Dorsolateral prefrontal cortex (tissue), 120 donors: ENCODE measurements at regions of chr15 and their contacts with region 1.

Region 1: DNA sequence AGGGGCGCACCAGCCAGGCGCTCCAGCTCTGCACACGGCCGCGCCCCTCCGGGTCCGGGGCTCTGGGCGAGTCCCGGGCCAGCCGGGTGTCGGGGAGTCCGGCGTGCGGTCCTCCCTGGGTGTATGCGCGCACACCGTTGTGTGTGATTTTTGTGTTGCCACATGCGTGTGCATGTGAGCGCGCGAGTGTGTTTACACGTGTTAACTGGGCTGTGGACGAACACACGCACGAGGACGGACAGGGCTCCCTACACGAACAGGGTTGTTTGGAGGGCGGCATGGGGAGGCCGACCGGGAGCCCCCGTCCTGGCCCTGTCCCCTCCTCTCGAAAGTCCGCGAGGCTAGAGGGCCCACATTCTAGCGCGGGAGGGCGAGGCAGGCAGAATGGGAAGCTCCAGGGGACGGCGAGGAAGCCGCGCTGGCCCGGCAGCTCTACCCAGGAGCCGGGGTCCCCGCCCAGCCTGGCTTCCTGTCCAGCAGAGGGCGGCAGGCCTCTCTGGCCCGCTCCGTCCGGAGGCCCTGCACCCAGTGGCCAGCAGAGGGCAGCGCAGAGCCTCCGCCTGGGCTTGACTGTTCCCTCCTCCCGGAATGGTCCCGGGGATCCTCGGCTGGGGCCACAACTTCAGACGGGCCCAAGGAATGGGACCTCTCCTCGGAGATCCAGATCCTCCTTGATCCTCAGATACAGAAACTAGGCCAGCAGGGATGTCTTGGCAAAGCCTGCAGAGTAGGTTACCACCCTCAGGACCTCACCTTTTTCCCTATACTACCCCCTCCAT is 611 bp upstream of the LINGO1 start:
- DNase-seq: peak; percentile 84 to 96 (median 90)
- H3K4me3 ChIP-seq: peak overlapping the region; percentile 47 to 81 (median 68)
- H3K27ac ChIP-seq: peak overlapping the region in 57 of 59 donors; percentile 36 to 95 (median 86)
- H3K27me3 ChIP-seq: peaks cover 0 to 14% (median 0%) of the 10 kb centered on the region in 45 donors
- CTCF ChIP-seq: peak; percentile 92 to 100 (median 100)

Region 2: DNA sequence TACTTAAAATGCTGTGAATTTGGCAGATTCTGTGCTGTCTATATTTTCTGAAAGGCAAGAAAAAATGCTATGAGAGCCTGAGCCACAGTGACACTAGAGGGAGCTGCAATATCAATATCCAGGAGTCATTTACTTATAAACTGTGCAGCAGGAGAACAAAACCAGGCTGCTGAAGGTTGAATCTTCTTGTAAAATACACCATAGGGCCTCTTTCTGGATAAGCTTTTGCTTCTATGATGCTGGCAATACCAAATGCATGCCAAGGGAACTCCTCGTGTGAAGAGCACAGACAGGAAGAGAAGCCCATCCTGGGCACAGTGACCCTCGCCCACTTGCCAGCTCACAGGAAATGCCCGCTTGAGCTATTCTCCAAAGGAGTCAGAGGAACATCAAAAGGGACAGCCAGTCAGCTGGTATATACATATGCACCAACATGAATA is 514.4 kb before region 1 on chr15:
- intact Hi-C with region 1: loop called in 1 of 2 experiments (anchors 5 kb)
- DNase-seq: peak in 2 of 10 donors; percentile 40 to 73
- H3K4me3 ChIP-seq: no peak overlapping the region
- H3K27ac ChIP-seq: peak overlapping the region in 26 of 59 donors; percentile 2 to 71 (median 38)
- H3K27me3 ChIP-seq: no peaks in the 10 kb centered on the region
- CTCF ChIP-seq: peak; percentile 54 to 93 (median 78)

Region 3: DNA sequence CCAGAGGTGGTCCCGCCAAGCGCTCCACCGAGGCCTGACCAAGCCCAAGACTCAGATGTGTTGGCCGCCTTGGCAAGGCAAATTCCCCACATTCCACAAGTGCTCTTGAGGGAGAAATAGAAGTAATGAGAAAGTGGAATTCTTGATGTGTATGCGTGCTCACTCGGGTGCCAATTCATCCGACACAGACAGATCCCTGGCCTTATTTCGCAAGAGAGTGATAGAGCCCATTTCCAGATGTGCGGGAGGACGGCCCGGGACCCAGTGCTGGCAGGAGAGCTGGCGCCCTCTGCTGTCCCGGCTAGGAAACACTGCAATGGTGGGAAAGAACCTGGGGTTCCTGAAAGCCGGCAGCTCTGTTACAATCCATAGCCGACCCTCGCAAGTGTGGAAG is 136.6 kb before region 1 on chr15:
- intact Hi-C with region 1: loop called (anchors 5 kb)
- DNase-seq: peak; percentile 40 to 84 (median 80)
- H3K4me3 ChIP-seq: peak overlapping the region in 50 of 59 donors; percentile 6 to 60 (median 33)
- H3K27ac ChIP-seq: peak overlapping the region; percentile 88 to 100 (median 99)
- H3K27me3 ChIP-seq: no peaks in the 10 kb centered on the region
- CTCF ChIP-seq: peak; percentile 70 to 96 (median 88)

Region 4: GRCh38 chr15:77577366-77577950 is 55.9 kb before region 1 on chr15:
- intact Hi-C with region 1: loop called in 1 of 2 experiments (anchors 1 kb)
- DNase-seq: peak; percentile 34 to 85 (median 78)
- H3K4me3 ChIP-seq: no peak overlapping the region
- H3K27ac ChIP-seq: peak overlapping the region; percentile 18 to 91 (median 81)
- H3K27me3 ChIP-seq: no peaks in the 10 kb centered on the region
- CTCF ChIP-seq: peak in 39 of 56 donors; percentile 9 to 62 (median 33)